ENCODE measurements at regions of chr11 and their contacts with region 1.

Region 1: DNA sequence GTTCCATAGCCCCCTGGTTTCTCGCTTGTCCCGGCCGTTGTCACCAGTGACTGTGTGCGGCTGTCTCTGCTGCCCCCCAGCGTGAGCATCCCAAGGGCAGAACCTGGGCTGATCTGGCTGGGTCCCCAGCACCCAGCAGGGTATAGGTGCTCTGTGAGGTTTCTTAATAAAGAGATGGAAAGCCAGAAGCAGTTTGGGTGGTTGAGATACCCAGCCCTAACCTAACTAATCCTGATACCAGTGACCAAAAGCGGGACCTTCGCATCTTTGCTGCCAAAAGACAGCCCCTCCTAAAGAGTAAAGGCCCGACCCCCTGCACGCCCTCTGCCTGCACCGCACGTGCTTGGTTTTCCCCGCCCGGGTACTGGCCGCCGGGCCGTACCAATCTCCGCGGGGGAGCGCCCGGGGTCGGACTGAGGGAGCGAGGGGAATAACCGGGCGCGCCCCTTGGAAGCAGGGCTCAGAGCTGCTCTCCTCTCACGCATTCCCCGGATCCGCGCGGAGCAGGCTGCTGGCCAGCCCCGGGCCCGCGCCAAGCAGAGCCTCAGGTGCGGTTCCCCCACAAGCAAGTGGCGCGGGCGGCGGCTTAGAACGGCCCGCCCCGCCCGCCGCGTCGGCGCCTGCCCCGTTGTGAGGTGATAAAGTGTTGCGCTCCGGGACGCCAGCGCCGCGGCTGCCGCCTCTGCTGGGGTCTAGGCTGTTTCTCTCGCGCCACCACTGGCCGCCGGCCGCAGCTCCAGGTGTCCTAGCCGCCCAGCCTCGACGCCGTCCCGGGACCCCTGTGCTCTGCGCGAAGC is at the start of gene DGAT2:
- DNase-seq: peak; percentile 73
- H3K4me3 Mint-ChIP-seq: peak within 1 kb of the TSS; percentile 77
- H3K27ac Mint-ChIP-seq: peak within 1 kb of the TSS; percentile 97
- H3K4me1 Mint-ChIP-seq: peaks cover 41% of the 10 kb centered on the region
- H3K27me3 Mint-ChIP-seq: no peaks in the 10 kb centered on the region
- CTCF ChIP-seq: no peak
- total RNA-seq, gene DGAT2: 6.4 and 7.3 TPM in 2 replicates

Region 2: DNA sequence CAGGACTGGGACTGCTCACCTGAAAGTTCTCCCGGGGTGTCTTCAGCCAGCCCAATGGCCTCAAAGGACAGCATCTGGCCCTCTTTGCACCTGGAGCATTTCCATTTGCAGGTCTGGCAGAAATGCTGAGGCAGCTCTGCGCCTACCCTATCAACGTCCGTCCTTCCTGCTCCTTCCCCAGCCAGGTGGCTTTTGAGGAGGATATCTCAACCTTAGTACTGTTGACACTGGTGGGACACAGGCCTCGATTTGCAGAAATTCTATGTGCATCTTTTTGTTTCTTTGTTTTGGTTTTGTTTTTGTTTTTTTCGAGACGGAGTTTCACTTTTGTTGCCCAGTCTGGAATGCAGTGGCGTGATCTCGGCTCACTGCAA is 45.7 kb before region 1 on chr11:
- CTCF ChIA-PET with region 1: interaction called, 4 read pairs
- POLR2A ChIA-PET with region 1: no interaction called
- intact Hi-C with region 1: loop called (anchors 1 kb)
- DNase-seq: no peak
- H3K4me3 Mint-ChIP-seq: no peak overlapping the region
- H3K27ac Mint-ChIP-seq: no peak overlapping the region
- H3K4me1 Mint-ChIP-seq: no peaks in the 10 kb centered on the region
- H3K27me3 Mint-ChIP-seq: no peaks in the 10 kb centered on the region
- CTCF ChIP-seq: no peak

Region 3: GRCh38 chr11:75910426-75911145 is 142.3 kb after region 1 on chr11:
- CTCF ChIA-PET with region 1: no interaction called
- POLR2A ChIA-PET with region 1: no interaction called
- intact Hi-C with region 1: no loop called
- DNase-seq: no peak
- H3K4me3 Mint-ChIP-seq: no peak overlapping the region
- H3K27ac Mint-ChIP-seq: no peak overlapping the region
- H3K4me1 Mint-ChIP-seq: no peaks in the 10 kb centered on the region
- H3K27me3 Mint-ChIP-seq: no peaks in the 10 kb centered on the region
- CTCF ChIP-seq: no peak

Region 4: DNA sequence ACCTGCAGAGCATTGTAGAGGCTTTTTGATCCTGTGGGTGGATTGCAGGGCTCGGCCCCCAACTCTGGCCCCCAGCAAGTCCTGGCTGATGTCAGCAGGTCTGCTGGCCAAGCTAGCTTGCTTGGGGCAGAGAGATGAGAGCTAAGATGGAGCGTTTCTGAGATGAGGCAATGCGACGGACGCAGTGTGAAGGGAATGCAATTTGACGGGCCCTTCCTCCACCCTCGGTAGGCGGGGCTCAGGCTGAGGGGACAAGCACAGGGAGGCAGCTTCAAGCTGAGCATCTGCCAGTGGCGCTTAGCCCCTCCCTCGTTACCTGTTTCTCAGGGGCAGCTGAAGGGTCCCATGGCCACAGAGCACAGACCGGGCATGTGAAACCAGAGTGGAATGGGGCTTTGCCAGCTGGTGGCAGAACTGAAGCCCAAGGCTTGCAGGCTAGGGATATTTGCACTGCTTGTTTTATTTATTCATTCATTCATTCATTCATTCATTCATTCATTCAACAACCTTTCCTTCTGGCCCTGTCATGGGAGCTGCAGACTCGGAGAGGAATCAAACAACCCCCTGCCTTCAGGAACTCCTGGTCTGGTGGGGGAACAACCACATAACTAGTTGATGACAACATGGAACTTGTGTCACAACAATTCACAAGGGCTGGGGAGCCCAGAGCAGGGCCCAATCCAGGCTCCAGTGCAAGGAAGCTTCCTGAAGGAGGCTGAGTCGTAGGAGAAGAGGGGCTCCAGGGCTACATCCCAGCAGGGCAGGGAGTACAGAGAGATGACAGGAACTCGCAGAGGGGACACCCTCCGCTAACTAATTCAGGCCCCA is 545.8 kb after region 1 on chr11:
- CTCF ChIA-PET with region 1: no interaction called
- POLR2A ChIA-PET with region 1: no interaction called
- intact Hi-C with region 1: no loop called
- DNase-seq: no peak
- H3K4me3 Mint-ChIP-seq: no peak overlapping the region
- H3K27ac Mint-ChIP-seq: no peak overlapping the region
- H3K4me1 Mint-ChIP-seq: peaks cover 9% of the 10 kb centered on the region
- H3K27me3 Mint-ChIP-seq: no peaks in the 10 kb centered on the region
- CTCF ChIP-seq: no peak

Measured in MCF 10A (cell line).